Pancreas (tissue), 10 donors: ENCODE measurements at regions of chr16 and their contacts with region 1.

Region 1: DNA sequence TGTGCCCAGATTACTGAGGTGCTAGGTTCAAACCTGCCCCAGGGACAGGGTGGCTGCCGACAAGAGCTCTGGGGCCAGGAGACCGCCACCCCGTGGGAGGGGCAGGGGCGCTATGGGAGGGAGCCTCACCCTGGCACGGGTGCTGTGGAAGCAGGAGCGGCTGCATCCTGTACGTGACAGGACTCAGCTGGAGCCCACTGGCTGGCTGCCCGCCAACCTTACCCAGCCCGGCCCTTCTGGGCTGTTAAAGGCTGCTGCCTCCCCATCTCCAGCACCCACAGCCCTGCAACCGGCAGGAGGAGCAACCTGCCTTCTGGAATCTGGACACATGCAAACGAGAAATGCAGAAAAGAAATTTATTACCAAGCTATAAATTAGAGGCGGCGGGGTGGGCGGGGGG is 11.2 kb downstream of the PAM16 start:
- DNase-seq: peak in 3 of 6 donors; percentile 60 to 80 (median 64)
- ATAC-seq: peak in 2 of 4 donors; percentile 6 to 8
- H3K4me3 ChIP-seq: no peak overlapping the region
- H3K27ac ChIP-seq: no peak overlapping the region
- H3K4me1 ChIP-seq: peaks cover 0 to under 1% (median 0%) of the 10 kb centered on the region in 3 donors
- H3K27me3 ChIP-seq: no peaks in the 10 kb centered on the region
- CTCF ChIP-seq: no peak

Region 2: GRCh38 chr16:4208341-4208751 is 131.6 kb before region 1 on chr16:
- intact Hi-C with region 1: loop called in 1 of 3 experiments (anchors 5 kb)
- DNase-seq: no peak
- ATAC-seq: no peak
- H3K4me3 ChIP-seq: no peak overlapping the region
- H3K27ac ChIP-seq: no peak overlapping the region
- H3K4me1 ChIP-seq: no peaks in the 10 kb centered on the region
- H3K27me3 ChIP-seq: no peaks in the 10 kb centered on the region
- CTCF ChIP-seq: no peak

Region 3: DNA sequence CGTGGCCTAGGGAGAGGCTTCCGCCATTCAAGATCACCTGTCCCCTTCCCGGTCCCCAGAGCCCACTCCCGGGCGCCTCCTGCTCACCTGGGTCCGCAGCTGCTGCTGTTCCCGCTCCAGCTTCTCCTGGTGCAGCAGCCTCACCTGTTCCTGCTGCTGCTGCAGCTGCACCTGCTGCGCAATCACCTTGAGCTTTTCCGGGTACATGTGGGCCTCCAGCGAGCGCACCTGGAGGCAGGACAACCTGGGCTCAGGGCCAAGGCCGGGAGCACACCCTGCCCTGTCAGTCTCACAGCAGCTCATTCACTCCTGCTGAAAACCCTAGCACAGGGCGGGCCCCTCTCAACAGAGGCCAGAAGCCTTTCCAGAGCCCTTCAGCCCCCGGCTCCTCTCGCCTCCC is 79.5 kb before region 1 on chr16:
- intact Hi-C with region 1: no loop called
- DNase-seq: peak; percentile 90 to 98 (median 94)
- ATAC-seq: peak; percentile 90 to 95 (median 92)
- H3K4me3 ChIP-seq: peak overlapping the region in 2 of 4 donors; percentile 16 to 17
- H3K27ac ChIP-seq: peak overlapping the region; percentile 62 to 69 (median 66)
- H3K4me1 ChIP-seq: peaks cover 4 to 22% (median 9%) of the 10 kb centered on the region in 3 donors
- H3K27me3 ChIP-seq: no peaks in the 10 kb centered on the region
- CTCF ChIP-seq: no peak

Region 4: DNA sequence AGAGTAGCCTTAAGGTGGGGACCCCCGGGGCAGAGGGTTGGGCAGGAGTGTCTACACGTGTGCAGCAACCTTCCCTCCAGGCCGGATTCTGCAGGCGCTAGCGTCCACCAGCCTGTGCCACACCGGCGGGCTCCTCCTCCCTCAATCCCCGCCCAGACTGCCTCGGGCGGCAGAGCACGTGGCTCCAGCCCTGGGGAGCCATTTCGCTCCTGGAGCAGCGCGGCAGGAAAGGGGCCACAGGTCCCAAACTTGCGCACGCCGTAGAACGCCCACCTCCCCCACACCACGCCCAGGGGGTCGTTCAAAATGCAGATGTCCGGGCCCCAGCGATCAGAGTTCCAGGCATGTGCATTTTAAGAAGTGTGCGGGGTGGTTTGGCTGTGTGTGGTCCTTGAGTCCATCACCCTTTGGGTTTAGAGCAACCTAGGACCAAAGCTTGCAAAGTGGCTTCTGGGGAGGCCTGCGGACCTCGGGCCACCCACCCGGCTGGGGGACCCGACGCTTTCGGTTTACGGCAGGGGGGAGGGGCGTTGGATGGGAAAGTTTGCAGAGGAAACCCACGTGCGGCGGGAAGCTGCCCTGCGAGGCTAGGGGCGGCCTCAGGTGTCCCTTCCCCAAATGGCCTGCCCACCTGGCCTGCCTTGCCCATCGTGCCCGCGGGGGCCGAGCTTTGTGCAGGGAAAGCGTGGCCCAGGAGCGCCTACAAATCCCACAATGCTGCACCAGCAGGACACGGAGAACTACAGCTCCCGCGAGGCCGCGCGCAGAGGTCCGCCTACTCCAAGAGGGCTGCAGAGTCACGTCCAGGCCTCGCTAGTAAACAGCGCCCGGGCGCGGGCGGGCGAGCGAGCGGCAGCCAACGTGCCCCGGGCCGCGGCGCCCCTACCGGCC is 68.5 kb before region 1 on chr16:
- intact Hi-C with region 1: no loop called
- DNase-seq: peak; percentile 91 to 98 (median 93)
- ATAC-seq: peak; percentile 79 to 91 (median 84)
- H3K4me3 ChIP-seq: peak overlapping the region; percentile 60 to 91 (median 70)
- H3K27ac ChIP-seq: peak overlapping the region; percentile 81 to 91 (median 86)
- H3K4me1 ChIP-seq: peaks cover 6 to 15% (median 7%) of the 10 kb centered on the region in 3 donors
- H3K27me3 ChIP-seq: no peaks in the 10 kb centered on the region
- CTCF ChIP-seq: no peak